ENCODE measurements at regions of chr1 and their contacts with region 1.

Region 1: GRCh38 chr1:11364170-11364569 is 91.2 kb downstream of the UBIAD1 start:
- DNase-seq: peak; percentile 19
- ATAC-seq: peak; percentile 88
- H3K4me3 ChIP-seq: no peak overlapping the region
- H3K27ac ChIP-seq: no peak overlapping the region
- H3K4me1 ChIP-seq: no peaks in the 10 kb centered on the region
- H3K27me3 ChIP-seq: no peaks in the 10 kb centered on the region
- CTCF ChIP-seq: peak; percentile 59 to 67 (median 61)
- POLR2A ChIP-seq: no peak
- RAD21 ChIP-seq: peak; percentile 74

Region 2: DNA sequence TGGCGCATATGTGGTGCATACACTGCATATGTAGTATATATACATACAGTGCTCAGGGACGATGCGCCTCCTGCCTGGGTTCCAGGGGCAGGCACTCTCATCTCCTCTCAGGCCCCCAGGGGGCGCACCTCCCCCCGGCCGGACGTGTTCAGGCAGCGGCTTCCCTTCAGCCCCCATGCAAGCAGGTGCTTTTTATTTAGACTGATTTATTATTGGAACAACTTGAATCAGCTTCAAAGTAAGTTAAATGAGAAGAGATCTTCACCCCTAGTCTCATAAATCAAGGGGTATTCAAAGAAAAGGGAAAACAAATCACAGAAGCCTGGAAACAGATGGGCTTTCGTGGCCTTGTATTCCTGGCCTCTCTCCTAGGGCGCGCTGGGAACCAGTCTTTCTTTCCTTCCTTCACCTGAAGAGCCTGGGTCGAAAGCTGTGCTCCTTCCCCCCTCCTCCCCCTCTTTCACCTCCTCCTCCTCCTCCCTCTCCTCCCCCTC is 26.5 kb before region 1 on chr1:
- CTCF ChIA-PET with region 1: interaction called, 9 read pairs
- POLR2A ChIA-PET with region 1: no interaction called
- RAD21 ChIA-PET with region 1: interaction called in 1 of 2 experiments, 5 read pairs
- intact Hi-C with region 1: loop called (anchors 2 kb)
- DNase-seq: peak; percentile 19
- ATAC-seq: peak; percentile 95
- H3K4me3 ChIP-seq: no peak overlapping the region
- H3K27ac ChIP-seq: no peak overlapping the region
- H3K4me1 ChIP-seq: peaks cover 5 to 7% of the 10 kb centered on the region in 2 experiments; a peak in 2 of 4 replicates
- H3K27me3 ChIP-seq: no peaks in the 10 kb centered on the region
- CTCF ChIP-seq: peak; percentile 88 to 98 (median 95)
- POLR2A ChIP-seq: no peak
- RAD21 ChIP-seq: peak; percentile 65

Region 3: DNA sequence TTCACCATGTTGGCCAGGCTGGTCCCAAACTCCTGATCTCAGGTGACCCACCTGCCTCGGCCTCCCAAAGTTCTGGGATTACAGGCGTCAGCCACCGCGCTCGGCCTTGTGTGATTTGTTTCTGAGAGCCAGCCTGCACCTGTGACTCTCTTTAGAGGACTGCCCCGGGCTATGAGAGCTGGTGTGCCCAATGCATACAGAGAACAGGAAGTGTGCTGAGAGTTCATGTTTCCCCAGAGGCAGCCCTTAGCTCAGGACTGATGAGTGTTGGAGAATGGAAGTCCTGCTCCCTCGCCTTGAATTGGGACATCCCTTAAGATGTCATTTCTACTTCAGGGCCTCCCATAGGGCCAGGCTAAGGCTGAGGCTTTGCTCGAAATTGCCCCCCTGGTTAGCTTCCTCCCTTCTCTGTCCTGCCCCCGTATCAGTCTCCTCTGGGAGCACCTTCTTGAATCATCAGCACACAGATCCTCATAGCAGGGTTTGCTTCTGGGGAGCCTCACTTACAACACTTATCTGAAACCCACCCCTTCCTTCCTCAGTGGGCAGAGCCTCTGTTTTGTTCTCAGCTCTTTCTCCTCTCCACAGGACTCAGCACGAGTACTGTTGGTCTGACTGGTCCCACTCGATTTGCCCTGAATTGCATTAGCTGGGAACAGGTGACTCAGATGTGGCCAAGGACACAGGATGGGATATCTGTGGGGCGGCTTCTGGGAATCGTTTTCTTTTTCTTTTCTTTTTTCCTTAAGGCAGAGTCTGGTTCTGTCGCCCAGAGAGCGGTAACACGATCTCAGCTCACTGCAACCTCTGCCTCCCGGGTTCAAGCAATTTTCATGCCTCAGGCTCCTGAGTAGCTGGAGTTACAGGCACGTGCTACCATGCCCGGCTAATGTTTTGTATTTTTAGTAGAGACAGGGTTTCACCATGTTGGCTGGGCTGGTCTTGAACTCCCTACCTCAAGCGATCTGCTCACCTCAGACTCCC is 11.1 kb before region 1 on chr1:
- CTCF ChIA-PET with region 1: interaction called, 14 read pairs
- POLR2A ChIA-PET with region 1: no interaction called
- RAD21 ChIA-PET with region 1: no interaction called
- intact Hi-C with region 1: no loop called
- DNase-seq: no peak
- ATAC-seq: no peak
- H3K4me3 ChIP-seq: no peak overlapping the region
- H3K27ac ChIP-seq: no peak overlapping the region
- H3K4me1 ChIP-seq: no peaks in the 10 kb centered on the region
- H3K27me3 ChIP-seq: 0 out of 2 replicates have a peak, but pooled peaks cover 3% of the 10 kb centered on the region
- CTCF ChIP-seq: no peak
- POLR2A ChIP-seq: no peak
- RAD21 ChIP-seq: no peak

Region 4: DNA sequence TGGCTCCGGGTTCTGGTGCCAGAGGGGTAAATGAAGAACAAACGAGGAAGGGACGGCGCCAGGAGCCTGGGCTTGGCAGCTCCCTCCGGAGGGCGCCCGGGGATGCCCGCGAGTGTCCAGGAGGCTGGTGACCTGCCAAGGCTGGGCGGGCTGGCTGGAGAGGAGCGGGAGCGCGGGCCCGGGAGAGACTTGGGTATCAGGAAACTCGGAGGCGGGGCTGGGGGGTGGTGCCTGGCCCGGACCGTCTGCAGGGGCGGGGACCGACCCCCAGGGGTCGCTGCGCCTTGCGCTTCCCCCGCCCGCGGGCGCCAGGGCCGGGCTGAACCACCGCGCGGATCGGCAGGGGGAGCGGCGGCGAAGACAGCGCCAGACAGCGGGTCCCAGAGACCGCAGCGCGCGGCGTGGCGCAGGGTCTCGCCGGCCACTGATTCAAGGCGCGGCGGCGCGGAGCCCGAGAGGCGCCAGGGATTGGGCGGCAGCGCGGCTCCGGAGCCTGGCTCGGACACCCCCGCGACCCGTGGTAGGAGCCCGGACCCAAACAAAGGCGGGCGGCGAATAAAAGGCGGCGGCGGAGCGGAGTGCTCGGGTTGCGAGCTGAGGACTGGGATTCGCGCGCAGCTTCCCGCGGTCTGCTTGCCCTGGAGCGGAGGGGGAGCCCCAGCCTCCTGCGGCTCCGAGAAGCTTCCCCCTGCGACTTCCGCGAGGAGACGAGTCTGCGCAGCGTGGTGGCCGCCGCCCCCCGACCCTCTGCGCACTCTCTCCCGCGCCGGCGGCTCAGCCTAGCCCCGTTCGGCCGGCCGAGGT is 114.6 kb after region 1 on chr1 and contains the start of gene DISP3:
- CTCF ChIA-PET with region 1: no interaction called
- POLR2A ChIA-PET with region 1: no interaction called
- RAD21 ChIA-PET with region 1: no interaction called
- intact Hi-C with region 1: no loop called
- DNase-seq: peak; percentile 56
- ATAC-seq: peak; percentile 91
- H3K4me3 ChIP-seq: peak within 1 kb of the TSS; percentile 55 to 68
- H3K27ac ChIP-seq: peak within 1 kb of the TSS; percentile 70; the same call in 1 of the 2 replicates
- H3K4me1 ChIP-seq: peaks cover 0 to 16% of the 10 kb centered on the region in 2 experiments; a peak in 1 of 4 replicates
- H3K27me3 ChIP-seq: peaks cover 58% of the 10 kb centered on the region
- CTCF ChIP-seq: peak; percentile 15 to 84 (median 62); a peak in 4 of 6 replicates
- POLR2A ChIP-seq: peak; percentile 88
- RAD21 ChIP-seq: peak; percentile 42
- total RNA-seq, gene DISP3: 2.3 TPM

Region 5: GRCh38 chr1:11789126-11790067 is 425.2 kb after region 1 on chr1:
- CTCF ChIA-PET with region 1: interaction called, 10 read pairs
- POLR2A ChIA-PET with region 1: no interaction called
- RAD21 ChIA-PET with region 1: no interaction called
- intact Hi-C with region 1: no loop called
- DNase-seq: no peak
- ATAC-seq: no peak
- H3K4me3 ChIP-seq: no peak overlapping the region
- H3K27ac ChIP-seq: peak overlapping the region; percentile 37; the same call in 1 of the 2 replicates
- H3K4me1 ChIP-seq: peaks cover 37 to 79% of the 10 kb centered on the region in 2 experiments
- H3K27me3 ChIP-seq: no peaks in the 10 kb centered on the region
- CTCF ChIP-seq: no peak
- POLR2A ChIP-seq: no peak
- RAD21 ChIP-seq: no peak